ENCODE measurements at regions of chr2 and their contacts with region 1.

Region 1: DNA sequence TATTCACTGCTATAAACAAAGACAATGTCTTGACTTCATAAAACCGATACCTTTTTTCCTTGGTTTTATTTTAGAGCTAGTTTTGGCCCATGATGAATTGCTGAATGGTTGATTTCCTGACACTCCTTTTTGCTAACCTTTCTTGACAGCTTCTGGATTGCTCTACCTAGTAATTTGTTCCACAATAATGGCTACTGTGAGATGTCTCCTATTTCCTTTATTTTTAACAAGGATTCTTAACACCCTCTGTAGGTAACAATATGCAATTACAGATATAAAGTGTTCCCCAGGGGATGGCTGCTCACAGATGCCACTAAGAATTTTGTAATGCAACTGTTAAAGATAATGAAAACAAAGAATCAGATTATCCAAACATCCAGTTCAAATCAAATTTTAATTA is 100.8 kb upstream of the ATP5MC3 start:
- DNase-seq: peak; percentile 20
- ATAC-seq: peak; percentile 82
- H3K4me3 ChIP-seq: no peak overlapping the region
- H3K27ac ChIP-seq: no peak overlapping the region
- H3K4me1 ChIP-seq: no peaks in the 10 kb centered on the region
- H3K27me3 ChIP-seq: peaks cover 0 to 5% of the 10 kb centered on the region in 2 experiments; a peak in 2 of 5 replicates
- CTCF ChIP-seq: peak; percentile 61
- EP300 ChIP-seq: no peak
- POLR2A ChIP-seq: no peak
- RAD21 ChIP-seq: no peak

Region 2: DNA sequence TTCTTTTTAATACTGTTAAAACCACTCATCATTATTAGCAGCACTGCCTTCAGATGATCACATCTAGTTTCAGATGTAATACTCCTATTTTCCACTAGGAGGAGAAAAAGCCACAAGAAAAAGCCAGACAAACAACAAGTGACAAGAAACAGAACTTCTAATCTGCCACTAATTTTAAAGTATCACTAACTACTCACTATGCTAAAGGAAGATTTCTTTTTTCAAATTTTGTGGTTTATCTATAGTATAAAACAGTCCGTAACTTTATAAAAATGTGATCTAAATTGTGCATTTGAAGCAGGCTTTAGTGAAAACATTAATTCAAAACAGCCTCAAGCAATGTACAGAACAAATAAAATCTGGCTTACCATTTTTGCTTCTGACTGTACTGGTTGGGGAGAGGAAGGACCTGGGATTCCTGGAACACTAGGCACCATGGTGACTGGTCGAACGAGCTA is 171.1 kb before region 1 on chr2:
- CTCF ChIA-PET with region 1: interaction called, 4 read pairs
- POLR2A ChIA-PET with region 1: no interaction called
- in situ Hi-C with region 1: no loop called
- intact Hi-C with region 1: loop called (anchors 1 kb)
- DNase-seq: peak; percentile 61
- ATAC-seq: peak; percentile 76
- H3K4me3 ChIP-seq: no peak overlapping the region
- H3K27ac ChIP-seq: no peak overlapping the region
- H3K4me1 ChIP-seq: no peaks in the 10 kb centered on the region
- H3K27me3 ChIP-seq: no peaks in the 10 kb centered on the region
- CTCF ChIP-seq: peak; percentile 62
- EP300 ChIP-seq: no peak
- POLR2A ChIP-seq: no peak
- RAD21 ChIP-seq: peak; percentile 26; the same call in 1 of the 2 replicates

Region 3: GRCh38 chr2:175203621-175204496 is 78.4 kb before region 1 on chr2:
- CTCF ChIA-PET with region 1: no interaction called
- POLR2A ChIA-PET with region 1: no interaction called
- in situ Hi-C with region 1: no loop called
- intact Hi-C with region 1: loop called (anchors 1 kb)
- DNase-seq: peak; percentile 50
- ATAC-seq: peak; percentile 100
- H3K4me3 ChIP-seq: no peak overlapping the region
- H3K27ac ChIP-seq: no peak overlapping the region
- H3K4me1 ChIP-seq: no peaks in the 10 kb centered on the region
- H3K27me3 ChIP-seq: peaks cover 0 to 7% of the 10 kb centered on the region in 2 experiments; a peak in 1 of 5 replicates
- CTCF ChIP-seq: peak; percentile 79
- EP300 ChIP-seq: no peak
- POLR2A ChIP-seq: no peak
- RAD21 ChIP-seq: peak; percentile 62

Region 4: DNA sequence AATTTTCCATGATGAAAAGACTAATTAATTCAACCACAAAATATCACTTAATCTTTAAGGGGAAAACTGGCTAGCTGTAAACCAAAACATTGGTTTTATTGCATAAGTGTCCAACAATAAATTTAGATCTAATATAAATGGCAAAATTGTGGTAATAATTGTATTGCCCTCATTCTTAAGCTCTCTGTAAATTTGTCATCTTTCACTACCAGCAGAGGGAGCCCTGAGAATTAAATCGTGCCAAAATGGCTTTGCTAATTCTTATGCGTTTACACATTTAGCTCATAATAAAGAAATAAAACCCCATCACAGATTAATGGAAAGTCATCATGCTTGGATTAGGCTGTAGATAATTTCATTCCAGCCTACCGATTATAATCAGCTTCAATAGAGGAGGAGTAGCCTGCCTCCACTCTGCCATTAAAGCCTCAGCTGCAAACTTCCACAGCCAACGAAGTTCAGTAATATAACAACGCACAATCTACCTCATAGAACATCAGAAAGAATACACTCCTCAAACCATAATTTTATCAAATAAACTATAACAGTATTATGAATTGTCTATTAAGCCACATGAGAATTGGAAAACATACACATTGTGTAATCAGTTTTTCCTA is 30.8 kb before region 1 on chr2:
- CTCF ChIA-PET with region 1: no interaction called
- POLR2A ChIA-PET with region 1: no interaction called
- in situ Hi-C with region 1: no loop called
- intact Hi-C with region 1: loop called (anchors 2 kb)
- DNase-seq: peak; percentile 36
- ATAC-seq: no peak; the same call in 2 of the 3 replicates
- H3K4me3 ChIP-seq: no peak overlapping the region
- H3K27ac ChIP-seq: no peak overlapping the region
- H3K4me1 ChIP-seq: no peaks in the 10 kb centered on the region
- H3K27me3 ChIP-seq: no peaks in the 10 kb centered on the region
- CTCF ChIP-seq: peak; percentile 60
- EP300 ChIP-seq: no peak
- POLR2A ChIP-seq: no peak
- RAD21 ChIP-seq: no peak

Region 5: DNA sequence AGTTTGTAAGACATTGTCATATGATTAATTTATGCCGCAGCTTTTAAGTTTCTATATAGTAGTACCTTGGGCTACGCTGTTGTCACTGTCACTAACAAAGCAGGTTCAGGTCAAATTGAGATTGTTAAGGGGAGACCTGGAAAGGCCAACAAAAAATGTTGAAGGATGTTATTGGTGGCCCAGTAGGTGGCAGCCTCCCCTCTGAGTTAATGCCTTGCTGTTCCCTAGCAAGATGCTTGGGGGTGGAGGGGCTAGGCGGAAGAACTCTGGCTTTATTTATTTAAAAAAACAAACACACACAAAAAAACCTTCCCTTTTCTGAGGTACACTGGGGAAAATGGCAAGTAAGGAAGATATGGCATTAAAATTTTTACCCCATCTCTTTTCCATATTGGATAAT is 27.5 kb after region 1 on chr2:
- CTCF ChIA-PET with region 1: no interaction called
- POLR2A ChIA-PET with region 1: no interaction called
- in situ Hi-C with region 1: no loop called
- intact Hi-C with region 1: no loop called
- DNase-seq: peak; percentile 27
- ATAC-seq: peak; percentile 86
- H3K4me3 ChIP-seq: no peak overlapping the region
- H3K27ac ChIP-seq: no peak overlapping the region
- H3K4me1 ChIP-seq: no peaks in the 10 kb centered on the region
- H3K27me3 ChIP-seq: 0 out of 5 replicates have a peak, but pooled peaks cover 0 to 3% of the 10 kb centered on the region in 2 experiments
- CTCF ChIP-seq: peak; percentile 71
- EP300 ChIP-seq: no peak
- POLR2A ChIP-seq: no peak
- RAD21 ChIP-seq: no peak; the same call in 1 of the 2 replicates

Measured in HepG2 (cell line).